ENCODE measurements at regions of chr16 and their contacts with region 1.

Region 1: DNA sequence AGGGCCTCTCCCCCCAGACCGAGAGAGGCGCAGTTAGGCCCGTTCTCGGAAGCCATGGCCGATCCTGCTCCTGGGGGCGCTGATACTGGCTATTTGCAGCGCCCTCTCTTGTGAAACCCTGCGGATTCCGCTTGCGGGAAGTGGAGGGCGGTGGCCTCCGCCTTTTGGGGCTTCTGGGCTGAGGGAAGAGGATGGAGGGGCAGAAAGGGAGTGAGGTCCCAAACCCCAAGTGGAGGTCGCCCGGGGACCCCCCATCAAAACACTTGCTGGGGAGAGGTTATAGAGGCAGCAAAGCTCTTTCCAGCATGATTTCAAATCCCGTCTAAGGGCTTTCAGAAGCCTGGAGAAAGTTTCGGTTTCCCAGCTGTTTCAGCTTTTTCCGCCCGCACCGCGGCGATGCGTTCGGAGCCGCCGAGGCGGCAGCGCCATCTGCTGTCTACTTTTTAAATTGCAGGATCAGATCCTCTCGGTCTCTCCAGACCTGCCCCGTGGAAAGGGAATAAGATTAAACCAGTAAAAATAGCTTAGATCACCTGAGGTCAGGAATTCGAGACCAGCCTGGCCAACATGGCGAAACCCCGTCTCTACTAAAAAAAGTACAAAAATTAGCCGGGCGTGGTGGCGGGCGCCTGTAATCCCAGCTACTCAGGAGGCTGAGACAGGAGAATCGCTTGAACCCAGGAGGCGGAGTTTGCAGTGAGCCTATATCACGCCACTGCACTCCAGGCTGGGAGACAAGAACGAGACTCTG is 15.8 kb downstream of the SNX20 start:
- DNase-seq: peak; percentile 87
- H3K4me3 Mint-ChIP-seq: peak overlapping the region; percentile 63
- H3K27ac Mint-ChIP-seq: peak overlapping the region; percentile 33
- H3K4me1 Mint-ChIP-seq: peaks cover 39% of the 10 kb centered on the region
- H3K27me3 Mint-ChIP-seq: no peaks in the 10 kb centered on the region

Region 2: DNA sequence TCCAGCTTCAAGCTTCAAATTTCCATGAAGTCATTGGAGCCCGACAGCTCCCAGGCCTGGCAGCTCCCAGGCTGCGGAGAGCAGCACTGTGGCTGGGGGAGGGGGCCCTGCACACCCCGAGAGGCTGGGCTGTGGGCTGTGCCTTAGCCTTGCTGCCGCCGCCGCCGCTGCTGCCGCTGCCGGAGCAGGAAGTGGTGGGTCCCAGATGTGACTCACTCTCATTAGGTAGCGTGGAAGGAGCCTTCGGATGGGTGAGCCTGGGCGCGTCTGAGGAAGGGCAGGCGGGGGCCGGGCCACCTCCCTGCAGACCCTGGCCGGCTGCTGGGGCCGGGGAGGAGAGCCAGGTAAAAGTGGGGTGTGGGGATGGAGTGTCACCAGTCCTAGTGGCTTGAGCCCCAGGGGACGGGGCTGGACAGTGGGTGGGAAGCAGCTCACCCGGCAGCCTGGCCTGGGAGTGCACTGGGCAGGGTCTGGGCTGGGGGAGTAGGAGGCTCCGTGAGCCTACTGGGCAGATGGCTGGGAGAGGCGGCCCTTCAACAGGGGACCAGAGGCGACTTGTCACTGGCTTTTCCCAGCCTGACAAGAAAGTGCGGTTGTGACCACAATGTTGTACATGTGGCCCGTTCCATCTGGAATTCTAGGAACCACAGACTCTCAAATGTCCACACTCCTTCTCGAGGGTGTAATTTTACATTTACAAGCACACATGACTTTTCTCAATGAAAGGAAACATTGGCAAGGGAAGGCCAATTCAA is 398.8 kb before region 1 on chr16 and contains the start of gene ADCY7:
- CTCF ChIA-PET with region 1: no interaction called
- POLR2A ChIA-PET with region 1: no interaction called
- intact Hi-C with region 1: loop called (anchors 5 kb)
- DNase-seq: peak; percentile 91
- H3K4me3 Mint-ChIP-seq: peak within 1 kb of the TSS; percentile 94
- H3K27ac Mint-ChIP-seq: peak within 1 kb of the TSS; percentile 97
- H3K4me1 Mint-ChIP-seq: peaks cover 71% of the 10 kb centered on the region
- H3K27me3 Mint-ChIP-seq: no peaks in the 10 kb centered on the region
- total RNA-seq, gene ADCY7: 100.0 to 107 TPM

Region 3: GRCh38 chr16:50368410-50369132 is 296.7 kb before region 1 on chr16 and contains the start of gene BRD7:
- CTCF ChIA-PET with region 1: interaction called, 25 read pairs
- POLR2A ChIA-PET with region 1: no interaction called
- intact Hi-C with region 1: loop called (anchors 5 kb)
- DNase-seq: peak; percentile 80
- H3K4me3 Mint-ChIP-seq: peak within 1 kb of the TSS; percentile 89
- H3K27ac Mint-ChIP-seq: peak within 1 kb of the TSS; percentile 80
- H3K4me1 Mint-ChIP-seq: peaks cover 45% of the 10 kb centered on the region
- H3K27me3 Mint-ChIP-seq: no peaks in the 10 kb centered on the region
- total RNA-seq, gene BRD7: 87.9 to 103 TPM

Region 4: GRCh38 chr16:50520451-50521245 is 144.7 kb before region 1 on chr16:
- CTCF ChIA-PET with region 1: no interaction called
- POLR2A ChIA-PET with region 1: no interaction called
- intact Hi-C with region 1: no loop called
- DNase-seq: no peak
- H3K4me3 Mint-ChIP-seq: no peak overlapping the region
- H3K27ac Mint-ChIP-seq: no peak overlapping the region
- H3K4me1 Mint-ChIP-seq: no peaks in the 10 kb centered on the region
- H3K27me3 Mint-ChIP-seq: peaks cover 2% of the 10 kb centered on the region

Region 5: GRCh38 chr16:50568187-50568830 is 97.0 kb before region 1 on chr16:
- CTCF ChIA-PET with region 1: no interaction called
- POLR2A ChIA-PET with region 1: no interaction called
- intact Hi-C with region 1: no loop called
- DNase-seq: no peak
- H3K4me3 Mint-ChIP-seq: no peak overlapping the region
- H3K27ac Mint-ChIP-seq: no peak overlapping the region
- H3K4me1 Mint-ChIP-seq: no peaks in the 10 kb centered on the region
- H3K27me3 Mint-ChIP-seq: no peaks in the 10 kb centered on the region

Region 6: GRCh38 chr16:50681021-50681885 is 15.9 kb after region 1 on chr16 and contains the start of gene SNX20:
- CTCF ChIA-PET with region 1: interaction called, 133 read pairs
- POLR2A ChIA-PET with region 1: interaction called, 17 read pairs
- intact Hi-C with region 1: no loop called
- DNase-seq: peak; percentile 79
- H3K4me3 Mint-ChIP-seq: peak within 1 kb of the TSS; percentile 89
- H3K27ac Mint-ChIP-seq: peak within 1 kb of the TSS; percentile 91
- H3K4me1 Mint-ChIP-seq: peaks cover 85% of the 10 kb centered on the region
- H3K27me3 Mint-ChIP-seq: no peaks in the 10 kb centered on the region
- total RNA-seq, gene SNX20: 55.4 to 56.9 TPM

Region 7: GRCh38 chr16:50741808-50742575 is 76.7 kb after region 1 on chr16 and contains the start of gene CYLD:
- CTCF ChIA-PET with region 1: interaction called, 153 read pairs
- POLR2A ChIA-PET with region 1: interaction called, 6 read pairs
- intact Hi-C with region 1: loop called (anchors 1 kb)
- DNase-seq: peak; percentile 100
- H3K4me3 Mint-ChIP-seq: peak within 1 kb of the TSS; percentile 94
- H3K27ac Mint-ChIP-seq: peak within 1 kb of the TSS; percentile 97
- H3K4me1 Mint-ChIP-seq: peaks cover 44% of the 10 kb centered on the region
- H3K27me3 Mint-ChIP-seq: no peaks in the 10 kb centered on the region
- total RNA-seq, gene CYLD: 133 to 135 TPM

Region 8: GRCh38 chr16:50814541-50814940 is 149.2 kb after region 1 on chr16:
- CTCF ChIA-PET with region 1: interaction called, 23 read pairs
- POLR2A ChIA-PET with region 1: interaction called, 3 read pairs
- intact Hi-C with region 1: no loop called
- DNase-seq: no peak
- H3K4me3 Mint-ChIP-seq: no peak overlapping the region
- H3K27ac Mint-ChIP-seq: no peak overlapping the region
- H3K4me1 Mint-ChIP-seq: no peaks in the 10 kb centered on the region
- H3K27me3 Mint-ChIP-seq: no peaks in the 10 kb centered on the region